Calu3 (cell line): ENCODE measurements at regions of chr10 and their contacts with region 1.

Region 1: GRCh38 chr10:43348511-43349312 is 22.7 kb upstream of the FXYD4 start:
- DNase-seq: peak; percentile 91
- H3K4me3 Mint-ChIP-seq: no peak overlapping the region
- H3K27ac Mint-ChIP-seq: no peak overlapping the region
- H3K4me1 Mint-ChIP-seq: peaks cover 55% of the 10 kb centered on the region
- H3K27me3 Mint-ChIP-seq: no peaks in the 10 kb centered on the region
- CTCF ChIP-seq: peak; percentile 81

Region 2: DNA sequence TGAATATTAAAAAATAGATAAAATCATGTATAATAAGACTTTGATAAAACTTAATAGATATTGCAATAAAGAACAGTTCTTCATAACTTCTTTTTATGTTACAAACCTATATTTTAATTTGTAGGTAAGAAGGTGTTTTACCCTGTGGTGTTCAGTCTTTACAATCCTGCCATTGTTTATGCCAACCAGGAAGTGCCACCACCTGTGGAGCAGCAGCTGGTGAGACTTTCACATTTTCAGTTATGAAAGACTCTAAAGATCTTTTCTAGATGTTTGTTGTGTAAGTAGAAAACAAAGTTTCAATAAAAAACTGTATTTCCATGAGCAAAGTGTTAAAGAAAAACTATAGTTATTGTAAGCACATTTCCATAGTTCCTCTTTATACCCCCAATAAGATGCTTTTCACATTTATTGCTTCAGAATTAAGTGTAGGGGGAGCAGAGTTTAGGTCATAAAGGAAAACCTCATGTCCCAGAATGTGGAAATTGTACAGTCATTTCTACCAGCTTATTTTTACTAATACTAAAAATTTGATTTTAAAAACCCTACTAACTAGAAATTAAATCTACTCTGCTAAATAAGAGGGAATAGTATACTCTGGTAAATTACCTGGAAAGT is 181.7 kb before region 1 on chr10:
- CTCF ChIA-PET with region 1: no interaction called
- intact Hi-C with region 1: no loop called
- DNase-seq: peak; percentile 21
- H3K4me3 Mint-ChIP-seq: no peak overlapping the region
- H3K27ac Mint-ChIP-seq: peak overlapping the region; percentile 31
- H3K4me1 Mint-ChIP-seq: peaks cover 8% of the 10 kb centered on the region
- H3K27me3 Mint-ChIP-seq: no peaks in the 10 kb centered on the region
- CTCF ChIP-seq: no peak

Region 3: DNA sequence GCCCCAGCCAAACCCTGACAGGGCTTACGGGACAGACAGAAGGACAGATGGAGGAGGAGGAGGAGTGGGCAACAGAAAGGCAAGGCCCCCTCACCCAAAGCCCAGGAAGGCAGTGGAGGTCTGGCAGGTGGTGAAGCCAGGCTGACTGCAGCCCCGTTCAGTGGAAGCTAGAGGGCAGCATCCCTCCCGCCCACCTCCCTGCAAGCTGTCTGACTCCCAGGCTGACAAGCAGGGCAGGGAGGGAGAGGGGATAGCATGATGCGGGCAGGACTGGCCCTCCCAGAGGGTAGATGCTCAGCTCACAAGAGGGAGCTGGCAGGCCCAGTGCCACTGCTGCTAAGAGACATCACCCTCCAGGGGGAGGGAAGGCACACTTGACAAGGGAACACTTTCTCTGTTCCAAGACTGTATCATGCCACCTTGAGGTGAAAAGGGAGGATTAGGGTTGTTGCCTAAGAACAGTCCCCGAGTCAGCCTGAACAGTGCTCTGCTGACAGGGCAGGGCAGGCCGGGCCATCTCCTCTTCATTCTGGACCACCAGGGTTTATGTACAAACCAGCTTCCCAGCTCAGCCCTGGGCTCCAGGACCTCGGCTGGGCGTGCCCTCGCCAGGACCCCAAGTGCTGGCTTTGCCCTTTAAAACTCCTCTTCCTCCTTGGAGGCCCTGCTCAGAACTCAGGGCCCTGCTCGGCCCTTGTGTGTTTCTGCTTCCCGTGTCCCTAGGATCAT is 143.6 kb before region 1 on chr10:
- CTCF ChIA-PET with region 1: interaction called, 5 read pairs
- intact Hi-C with region 1: loop called (anchors 5 kb)
- DNase-seq: peak; percentile 63
- H3K4me3 Mint-ChIP-seq: no peak overlapping the region
- H3K27ac Mint-ChIP-seq: no peak overlapping the region
- H3K4me1 Mint-ChIP-seq: no peaks in the 10 kb centered on the region
- H3K27me3 Mint-ChIP-seq: no peaks in the 10 kb centered on the region
- CTCF ChIP-seq: peak; percentile 74

Region 4: DNA sequence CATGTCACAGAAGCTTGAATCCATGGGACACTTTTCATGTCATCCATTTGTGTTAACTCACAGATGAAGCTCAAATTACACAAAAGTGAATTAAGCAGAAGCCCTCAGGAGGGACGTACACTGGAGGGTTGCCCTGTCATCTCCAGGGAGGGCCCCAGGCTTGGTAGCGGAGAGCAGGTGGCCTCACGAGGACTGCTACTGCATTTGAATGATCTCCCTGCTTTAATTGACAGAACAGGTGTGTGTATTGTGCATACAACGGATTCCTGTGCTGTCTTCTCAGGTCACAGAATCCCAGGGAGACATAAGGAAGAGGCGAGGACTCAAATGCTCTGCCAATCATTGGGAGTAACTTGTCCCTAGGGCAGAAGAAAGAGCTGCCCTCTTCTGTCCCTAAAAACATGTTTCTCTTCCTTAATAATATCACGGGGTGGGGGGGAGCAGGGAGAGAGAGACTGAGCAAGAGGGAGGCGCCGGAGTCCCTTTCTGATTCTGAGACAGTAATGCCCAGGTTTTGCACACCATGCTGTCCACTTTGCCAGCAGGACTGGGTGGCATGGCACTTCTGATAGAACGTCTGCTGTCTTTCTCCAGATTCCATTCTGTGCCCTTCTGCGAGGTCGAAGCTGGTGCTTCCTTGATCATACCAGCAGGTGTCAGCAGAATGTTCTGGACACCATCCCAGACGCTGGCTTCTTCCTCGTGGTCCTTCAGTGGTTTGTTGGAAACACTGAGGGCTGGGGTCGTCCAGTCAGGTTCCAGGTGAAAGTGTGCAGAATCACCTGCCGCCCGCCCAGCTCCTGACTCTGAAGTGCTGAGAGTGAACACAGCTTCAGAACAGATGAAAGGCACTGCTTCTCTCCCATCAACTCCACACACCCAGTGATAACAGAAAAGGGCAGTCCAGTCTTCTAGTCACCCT is 55.7 kb before region 1 on chr10:
- CTCF ChIA-PET with region 1: interaction called, 10 read pairs
- intact Hi-C with region 1: loop called (anchors 1 kb)
- DNase-seq: peak; percentile 61
- H3K4me3 Mint-ChIP-seq: no peak overlapping the region
- H3K27ac Mint-ChIP-seq: no peak overlapping the region
- H3K4me1 Mint-ChIP-seq: peaks cover 19% of the 10 kb centered on the region
- H3K27me3 Mint-ChIP-seq: no peaks in the 10 kb centered on the region
- CTCF ChIP-seq: peak; percentile 65

Region 5: GRCh38 chr10:43396928-43397624 is 48.4 kb after region 1 on chr10:
- CTCF ChIA-PET with region 1: no interaction called
- intact Hi-C with region 1: loop called (anchors 5 kb)
- DNase-seq: peak; percentile 94
- H3K4me3 Mint-ChIP-seq: peak overlapping the region; percentile 85
- H3K27ac Mint-ChIP-seq: peak overlapping the region; percentile 81
- H3K4me1 Mint-ChIP-seq: peaks cover 55% of the 10 kb centered on the region
- H3K27me3 Mint-ChIP-seq: no peaks in the 10 kb centered on the region
- CTCF ChIP-seq: no peak